Thyroid gland (tissue), 4 donors: ENCODE measurements at regions of chr18 and their contacts with region 1.

Region 1: DNA sequence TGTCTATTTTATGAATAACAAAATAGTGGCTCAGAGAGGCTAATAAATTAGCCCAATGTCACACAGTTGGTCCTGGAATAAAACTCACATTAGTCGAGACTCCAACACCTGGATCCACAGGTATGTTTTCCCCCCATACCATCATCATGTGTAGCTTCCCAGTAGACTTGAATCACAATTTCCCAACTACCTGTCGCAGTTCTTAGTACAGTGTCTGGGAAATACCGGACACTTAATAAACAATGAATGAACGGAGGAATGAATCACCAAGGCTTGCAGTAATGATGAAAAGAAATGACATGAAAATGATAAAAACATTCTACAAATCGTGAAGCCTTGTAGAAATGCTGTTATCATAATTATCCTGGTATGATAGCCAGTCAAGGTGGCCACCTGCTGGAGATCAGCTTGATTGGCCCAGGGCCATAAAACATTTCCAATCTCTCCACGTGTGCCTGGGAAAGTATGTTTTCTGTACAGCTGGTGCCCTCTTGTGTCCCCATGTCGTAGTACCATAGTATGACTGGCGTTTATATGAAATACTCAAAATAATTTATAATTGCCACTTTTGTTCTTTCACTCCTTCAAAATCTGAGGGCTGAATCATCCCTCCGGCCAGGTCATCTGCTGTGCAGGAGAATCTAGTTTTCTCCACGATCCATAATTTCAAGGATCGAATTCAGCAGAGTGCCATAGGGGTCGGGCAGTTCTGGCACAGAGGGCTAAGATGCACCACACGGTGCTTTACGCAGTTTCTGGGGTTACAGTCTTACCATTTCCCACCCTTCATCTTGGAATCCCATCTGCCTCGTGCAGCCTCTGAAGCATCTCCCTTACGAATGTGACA is 95.4 kb downstream of the LAMA1 start:
- DNase-seq: peak; percentile 51 to 58
- H3K4me3 ChIP-seq: no peak overlapping the region
- H3K27ac ChIP-seq: no peak overlapping the region
- H3K4me1 ChIP-seq: no peaks in the 10 kb centered on the region
- H3K27me3 ChIP-seq: no peaks in the 10 kb centered on the region
- CTCF ChIP-seq: peak in 5 of 6 experiments; percentile 21 to 74 (median 46)
- POLR2A ChIP-seq: no peak

Region 2: DNA sequence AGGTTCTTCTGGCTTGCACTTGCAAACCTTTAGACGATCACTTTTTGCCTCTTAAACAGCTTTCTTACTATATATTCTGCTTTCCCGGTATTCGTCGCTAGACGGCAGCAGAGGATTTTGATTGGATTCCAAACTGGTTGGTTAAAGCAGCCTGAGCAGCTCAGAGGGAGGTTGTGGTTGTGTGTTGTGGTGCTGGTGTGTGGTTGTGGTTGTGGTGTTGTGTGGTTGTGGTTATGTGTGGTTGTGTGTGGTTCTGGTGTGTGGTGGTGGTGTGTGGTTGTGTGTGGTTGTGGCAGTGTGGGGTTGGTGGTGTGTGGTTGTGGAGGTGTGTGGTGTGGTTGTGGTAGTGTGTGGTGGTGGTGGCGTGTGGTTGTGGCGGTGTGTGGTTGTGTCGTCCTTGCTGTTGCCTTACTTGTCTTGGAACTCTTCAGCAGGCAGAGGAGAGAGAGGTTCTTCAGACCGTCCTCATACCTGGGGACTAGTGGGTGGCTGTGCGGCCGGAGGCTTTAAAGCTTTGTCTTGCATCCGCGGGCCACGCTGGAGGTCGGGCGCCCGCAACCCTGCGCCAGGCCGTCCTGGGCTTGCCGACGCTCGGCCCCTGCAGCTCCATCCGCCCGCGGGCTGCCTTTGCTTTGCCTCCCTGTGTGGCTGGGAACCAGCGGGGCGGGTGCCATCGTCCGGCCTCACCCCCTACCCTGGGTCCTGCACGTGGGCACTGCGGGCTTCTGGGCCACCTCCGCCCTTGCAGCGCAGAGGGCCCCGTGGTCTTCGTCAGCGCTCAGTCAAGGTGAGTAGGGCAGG is 101.9 kb before region 1 on chr18:
- intact Hi-C with region 1: loop called (anchors 10 kb)
- DNase-seq: peak; percentile 50 to 60
- H3K4me3 ChIP-seq: no peak overlapping the region
- H3K27ac ChIP-seq: no peak overlapping the region
- H3K4me1 ChIP-seq: no peaks in the 10 kb centered on the region
- H3K27me3 ChIP-seq: no peaks in the 10 kb centered on the region
- CTCF ChIP-seq: peak in 4 of 6 experiments; percentile 39 to 87 (median 66)
- POLR2A ChIP-seq: no peak

Region 3: GRCh38 chr18:6992761-6993160 is 29.5 kb before region 1 on chr18:
- intact Hi-C with region 1: no loop called
- DNase-seq: peak; percentile 49 to 67
- H3K4me3 ChIP-seq: no peak overlapping the region
- H3K27ac ChIP-seq: peak overlapping the region in 1 of 3 donors; percentile 24
- H3K4me1 ChIP-seq: peaks cover 3 to 5% of the 10 kb centered on the region in 2 donors
- H3K27me3 ChIP-seq: no peaks in the 10 kb centered on the region
- CTCF ChIP-seq: no peak
- POLR2A ChIP-seq: no peak